ENCODE measurements at regions of chr19 and their contacts with region 1.

Region 1: GRCh38 chr19:46728693-46729676 is 12.1 kb upstream of the PRKD2 start:
- DNase-seq: no peak
- H3K4me3 ChIP-seq: no peak overlapping the region
- H3K27ac ChIP-seq: no peak overlapping the region
- H3K4me1 ChIP-seq: no peaks in the 10 kb centered on the region
- H3K27me3 ChIP-seq: no peaks in the 10 kb centered on the region
- CTCF ChIP-seq: peak; percentile 85 to 92 (median 91)

Region 2: DNA sequence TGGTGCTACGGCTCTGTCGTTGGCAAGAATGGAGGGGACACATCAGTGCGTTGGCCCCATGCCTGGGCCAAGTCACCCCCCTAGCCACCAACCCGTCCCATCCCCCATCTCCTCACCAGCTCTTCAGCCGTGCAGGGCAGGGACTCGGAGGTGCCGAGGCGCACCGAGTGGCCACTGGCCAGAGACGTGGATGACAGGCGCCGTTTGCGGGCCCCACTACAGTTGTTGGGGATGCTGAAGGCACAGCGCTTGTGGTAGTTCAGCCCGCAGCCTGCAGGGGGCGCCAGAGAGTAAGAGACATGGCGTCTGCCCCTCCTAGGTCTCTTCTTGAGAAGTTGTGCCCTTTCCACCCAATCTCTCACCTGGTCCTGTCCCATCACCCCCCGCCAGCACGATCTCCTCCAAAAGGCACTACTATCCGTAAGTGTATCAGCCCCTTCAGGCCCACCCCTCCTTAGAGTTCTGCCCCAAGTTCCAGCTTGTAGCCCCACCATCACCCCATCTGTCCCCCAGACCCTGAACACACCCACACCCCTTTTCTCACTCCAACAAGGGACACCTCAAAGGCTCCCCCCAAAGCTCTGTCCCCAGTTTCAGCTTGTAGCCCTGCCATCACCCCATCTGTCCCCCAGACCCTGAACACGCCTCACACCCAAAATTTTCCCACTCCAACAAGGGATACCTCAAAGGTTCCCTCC is 24.5 kb before region 1 on chr19:
- intact Hi-C with region 1: loop called (anchors 1 kb)
- DNase-seq: peak in 1 of 2 donors; percentile 82
- H3K4me3 ChIP-seq: no peak overlapping the region
- H3K27ac ChIP-seq: no peak overlapping the region
- H3K4me1 ChIP-seq: no peaks in the 10 kb centered on the region
- H3K27me3 ChIP-seq: no peaks in the 10 kb centered on the region
- CTCF ChIP-seq: peak; percentile 84 to 98 (median 92)

Region 3: GRCh38 chr19:46963093-46963734 is 234.2 kb after region 1 on chr19:
- intact Hi-C with region 1: no loop called
- DNase-seq: no peak
- H3K4me3 ChIP-seq: no peak overlapping the region
- H3K27ac ChIP-seq: no peak overlapping the region
- H3K4me1 ChIP-seq: peaks cover 0 to 3% of the 10 kb centered on the region in 2 donors
- H3K27me3 ChIP-seq: no peaks in the 10 kb centered on the region
- CTCF ChIP-seq: no peak